ENCODE measurements at regions of chr1 and their contacts with region 1.

Region 1: GRCh38 chr1:161792740-161793139 is 26.6 kb downstream of the ATF6 start:
- DNase-seq: no peak
- ATAC-seq: peak; percentile 96
- H3K4me3 Mint-ChIP-seq: no peak overlapping the region
- H3K27ac Mint-ChIP-seq: no peak overlapping the region
- H3K4me1 Mint-ChIP-seq: peaks cover 30% of the 10 kb centered on the region
- H3K27me3 Mint-ChIP-seq: no peaks in the 10 kb centered on the region

Region 2: DNA sequence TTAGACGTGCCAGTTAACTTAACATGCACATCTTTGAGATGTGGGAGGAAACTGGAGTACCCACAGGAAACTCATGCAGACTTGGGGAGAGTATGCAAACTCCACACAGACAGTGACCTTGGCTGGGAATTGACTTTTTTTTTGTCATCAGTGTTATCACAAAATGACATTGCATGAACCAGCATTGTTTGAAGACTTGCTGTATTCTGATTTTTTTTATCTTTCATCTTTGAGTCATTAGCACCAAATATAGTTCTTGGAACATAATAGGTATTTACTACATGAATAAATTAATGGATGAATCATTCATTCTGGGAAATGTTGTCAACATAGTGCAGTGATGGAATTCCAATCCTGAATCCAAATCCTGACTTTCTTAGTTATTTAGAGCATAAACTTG is 50.4 kb after region 1 on chr1:
- CTCF ChIA-PET with region 1: interaction called, 8 read pairs
- POLR2A ChIA-PET with region 1: no interaction called
- intact Hi-C with region 1: loop called in 1 of 2 experiments (anchors 10 kb)
- DNase-seq: no peak
- ATAC-seq: no peak
- H3K4me3 Mint-ChIP-seq: no peak overlapping the region
- H3K27ac Mint-ChIP-seq: no peak overlapping the region
- H3K4me1 Mint-ChIP-seq: peaks cover 10% of the 10 kb centered on the region
- H3K27me3 Mint-ChIP-seq: no peaks in the 10 kb centered on the region

Region 3: GRCh38 chr1:161915051-161915503 is 122.3 kb after region 1 on chr1:
- CTCF ChIA-PET with region 1: interaction called, 3 read pairs
- POLR2A ChIA-PET with region 1: interaction called, 4 read pairs
- intact Hi-C with region 1: loop called in 1 of 2 experiments (anchors 5 kb)
- DNase-seq: peak; percentile 73
- ATAC-seq: peak; percentile 82
- H3K4me3 Mint-ChIP-seq: no peak overlapping the region
- H3K27ac Mint-ChIP-seq: no peak overlapping the region
- H3K4me1 Mint-ChIP-seq: peaks cover 34% of the 10 kb centered on the region
- H3K27me3 Mint-ChIP-seq: no peaks in the 10 kb centered on the region

Region 4: DNA sequence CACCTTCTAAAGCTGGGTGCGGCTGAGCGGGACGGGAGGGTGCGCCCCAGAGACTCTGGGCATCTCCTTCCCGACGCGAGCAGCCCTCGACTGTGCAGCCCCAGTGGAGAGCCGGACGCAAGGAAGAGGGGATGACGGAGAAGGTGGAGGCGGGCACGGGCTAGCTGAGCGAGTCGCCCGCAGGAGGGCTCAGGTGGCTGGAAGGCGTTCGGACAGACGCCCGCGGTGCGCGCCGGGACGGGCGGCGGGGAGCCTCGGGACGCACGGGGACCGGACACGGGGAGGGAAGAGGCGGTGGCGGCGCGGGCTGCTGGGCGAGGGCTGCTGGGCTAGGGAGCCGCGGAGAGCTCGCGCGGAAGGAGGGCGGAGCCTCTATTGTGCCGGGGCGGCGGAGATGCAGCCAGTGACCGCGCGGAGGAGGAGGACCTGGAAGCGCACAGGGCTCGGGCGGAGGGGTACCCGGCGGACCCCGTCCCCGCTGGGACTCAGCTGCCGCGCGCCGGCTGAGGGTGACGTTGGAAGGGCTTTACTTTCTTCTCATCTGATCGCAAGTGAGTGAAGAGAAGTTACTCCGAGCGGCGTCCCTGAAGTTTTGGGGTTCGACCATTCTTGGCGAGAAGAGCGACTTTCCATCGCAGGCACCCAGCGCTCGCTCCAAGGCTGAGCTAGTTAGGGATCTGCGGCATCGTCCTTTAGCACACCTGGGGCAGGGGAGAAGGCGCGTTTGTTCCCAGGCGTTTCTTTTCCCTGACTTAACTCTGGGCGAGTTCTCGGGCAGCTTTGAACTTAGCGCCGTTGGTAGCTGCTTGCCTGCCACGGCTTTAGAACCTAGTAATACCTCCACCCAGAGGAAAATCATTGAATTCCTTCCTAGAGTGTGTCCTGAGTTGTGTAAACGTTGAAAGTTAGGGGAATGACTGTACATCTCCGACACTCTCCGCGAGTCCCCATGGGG is 231.1 kb after region 1 on chr1 and contains the start of gene OLFML2B:
- CTCF ChIA-PET with region 1: interaction called, 18 read pairs
- POLR2A ChIA-PET with region 1: no interaction called
- intact Hi-C with region 1: loop called in 1 of 2 experiments (anchors 1 kb)
- DNase-seq: peak; percentile 70
- ATAC-seq: peak; percentile 91
- H3K4me3 Mint-ChIP-seq: peak within 1 kb of the TSS; percentile 78
- H3K27ac Mint-ChIP-seq: peak within 1 kb of the TSS; percentile 40
- H3K4me1 Mint-ChIP-seq: peaks cover 4% of the 10 kb centered on the region
- H3K27me3 Mint-ChIP-seq: peaks cover 39% of the 10 kb centered on the region
- total RNA-seq, gene OLFML2B: 0.14 to 0.28 TPM

Region 5: DNA sequence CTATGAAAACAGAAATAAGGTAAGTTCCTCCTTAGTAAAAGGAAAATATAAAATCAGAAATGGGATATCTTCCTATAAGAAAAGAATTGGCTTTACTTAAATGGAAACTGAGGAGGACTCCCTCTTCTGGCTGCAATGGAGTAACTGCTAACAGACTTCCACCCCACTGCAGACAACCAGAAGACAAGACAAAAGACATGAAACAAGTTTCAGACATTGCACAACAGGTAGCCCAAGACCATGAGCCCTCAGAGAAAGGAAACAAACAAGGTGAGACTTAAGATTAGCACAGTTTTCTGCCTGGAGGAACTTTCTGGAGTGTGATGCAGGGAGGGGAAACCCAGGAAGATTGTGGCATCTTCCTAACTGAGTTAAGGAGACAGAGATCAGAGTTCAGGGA is 247.9 kb after region 1 on chr1:
- CTCF ChIA-PET with region 1: interaction called, 105 read pairs
- POLR2A ChIA-PET with region 1: interaction called, 7 read pairs
- intact Hi-C with region 1: loop called (anchors 1 kb)
- DNase-seq: no peak
- ATAC-seq: no peak
- H3K4me3 Mint-ChIP-seq: no peak overlapping the region
- H3K27ac Mint-ChIP-seq: no peak overlapping the region
- H3K4me1 Mint-ChIP-seq: peaks cover 2% of the 10 kb centered on the region
- H3K27me3 Mint-ChIP-seq: no peaks in the 10 kb centered on the region

Region 6: GRCh38 chr1:162276493-162276892 is 483.8 kb after region 1 on chr1:
- CTCF ChIA-PET with region 1: no interaction called
- POLR2A ChIA-PET with region 1: no interaction called
- intact Hi-C with region 1: loop called in 1 of 2 experiments (anchors 10 kb)
- DNase-seq: no peak
- ATAC-seq: no peak
- H3K4me3 Mint-ChIP-seq: no peak overlapping the region
- H3K27ac Mint-ChIP-seq: no peak overlapping the region
- H3K4me1 Mint-ChIP-seq: no peaks in the 10 kb centered on the region
- H3K27me3 Mint-ChIP-seq: peaks cover 17% of the 10 kb centered on the region

Region 7: DNA sequence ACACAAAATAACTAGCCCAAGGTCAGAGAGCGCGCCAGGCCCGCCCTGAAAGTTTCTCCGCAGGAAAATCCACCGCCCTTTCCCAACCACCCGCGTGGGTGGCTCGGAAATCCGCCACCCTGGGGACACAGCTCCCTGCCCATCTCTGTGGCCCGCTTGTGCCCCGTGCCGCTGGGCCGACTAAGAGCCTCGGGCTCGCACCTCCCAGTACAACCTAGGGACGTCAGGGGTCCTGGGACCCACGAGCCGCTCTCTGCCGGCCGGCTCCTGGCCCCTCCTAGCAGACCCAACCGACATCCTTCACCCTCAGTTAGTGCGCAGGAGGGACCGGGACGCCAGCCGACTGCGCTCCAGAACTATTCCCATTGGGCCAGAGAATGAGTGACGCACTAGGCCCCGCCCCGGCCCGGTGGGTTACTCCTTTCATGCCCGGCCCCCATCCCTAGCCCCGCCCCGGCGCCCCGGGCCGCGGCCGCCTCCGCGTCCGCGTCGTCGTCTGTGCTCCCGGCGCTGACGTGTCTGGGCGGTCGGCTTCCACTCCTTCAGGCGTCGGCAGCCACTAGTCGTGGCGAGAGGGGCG is 768.4 kb after region 1 on chr1:
- CTCF ChIA-PET with region 1: no interaction called
- POLR2A ChIA-PET with region 1: no interaction called
- intact Hi-C with region 1: loop called in 1 of 2 experiments (anchors 10 kb)
- DNase-seq: peak; percentile 99
- ATAC-seq: peak; percentile 98
- H3K4me3 Mint-ChIP-seq: peak overlapping the region; percentile 79
- H3K27ac Mint-ChIP-seq: peak overlapping the region; percentile 94
- H3K4me1 Mint-ChIP-seq: peaks cover 35% of the 10 kb centered on the region
- H3K27me3 Mint-ChIP-seq: no peaks in the 10 kb centered on the region

Measured in activated CD4-positive, alpha-beta T cell treated with anti-CD3 and anti-CD28 coated beads for 36 hours (primary cell).